Activated CD8-positive, alpha-beta T cell treated with anti-CD3 and anti-CD28 coated beads for 36 hours (primary cell): ENCODE measurements at regions of chr12 and their contacts with region 1.

Region 1: GRCh38 chr12:44774815-44775411 is 101.2 kb downstream of the NELL2 start:
- DNase-seq: peak; percentile 74
- ATAC-seq: peak; percentile 53
- H3K4me3 Mint-ChIP-seq: no peak overlapping the region
- H3K27ac Mint-ChIP-seq: no peak overlapping the region
- H3K4me1 Mint-ChIP-seq: peaks cover 6% of the 10 kb centered on the region
- H3K27me3 Mint-ChIP-seq: no peaks in the 10 kb centered on the region
- CTCF ChIP-seq: peak; percentile 89

Region 2: DNA sequence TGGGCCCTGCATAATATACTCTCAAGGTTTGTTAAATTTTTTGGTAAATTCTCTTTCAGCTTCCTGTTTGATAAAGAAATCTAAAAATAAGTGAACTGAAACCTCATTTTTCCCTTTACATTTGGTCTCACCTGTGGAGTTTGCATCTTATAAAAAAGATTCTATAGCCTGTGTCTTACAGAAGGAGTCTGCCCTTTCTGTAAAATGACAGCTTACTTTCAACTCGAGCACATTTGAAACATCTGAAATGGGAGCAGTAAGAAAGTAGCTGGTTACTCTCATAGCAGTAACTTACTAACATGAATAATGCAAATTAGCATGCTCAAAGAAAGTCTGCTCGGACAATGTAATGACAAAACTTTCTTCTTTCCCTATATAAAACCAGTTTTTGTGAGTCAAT is 54.6 kb before region 1 on chr12:
- CTCF ChIA-PET with region 1: no interaction called
- POLR2A ChIA-PET with region 1: no interaction called
- intact Hi-C with region 1: no loop called
- DNase-seq: no peak
- ATAC-seq: no peak
- H3K4me3 Mint-ChIP-seq: no peak overlapping the region
- H3K27ac Mint-ChIP-seq: no peak overlapping the region
- H3K4me1 Mint-ChIP-seq: peaks cover 58% of the 10 kb centered on the region
- H3K27me3 Mint-ChIP-seq: no peaks in the 10 kb centered on the region
- CTCF ChIP-seq: no peak

Region 3: DNA sequence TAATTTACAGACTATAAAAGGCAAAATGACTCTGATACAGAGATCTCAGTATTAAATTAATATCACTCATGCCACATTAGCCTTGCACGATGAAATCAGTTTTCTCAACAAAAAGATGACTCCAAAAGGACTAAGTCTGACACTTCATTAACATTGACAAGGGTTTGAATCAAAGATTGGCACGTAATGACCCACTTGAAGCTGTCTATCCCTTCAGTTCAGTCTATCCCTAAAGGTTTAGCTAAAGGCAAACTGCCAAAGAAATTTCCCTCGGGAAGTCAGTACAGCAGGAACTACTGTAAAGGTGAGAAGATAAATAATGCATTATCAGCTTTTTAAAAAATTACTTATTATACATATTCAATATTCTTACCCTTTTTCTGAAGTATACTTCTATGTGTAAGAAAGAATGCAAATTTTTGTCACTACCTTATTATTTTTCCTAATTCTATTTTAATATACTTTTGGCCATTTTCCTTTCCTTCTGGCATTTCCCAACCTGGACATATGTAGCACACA is 25.9 kb before region 1 on chr12:
- CTCF ChIA-PET with region 1: interaction called, 10 read pairs
- POLR2A ChIA-PET with region 1: no interaction called
- intact Hi-C with region 1: no loop called
- DNase-seq: no peak
- ATAC-seq: no peak
- H3K4me3 Mint-ChIP-seq: no peak overlapping the region
- H3K27ac Mint-ChIP-seq: no peak overlapping the region
- H3K4me1 Mint-ChIP-seq: peaks cover 30% of the 10 kb centered on the region
- H3K27me3 Mint-ChIP-seq: no peaks in the 10 kb centered on the region
- CTCF ChIP-seq: no peak

Region 4: DNA sequence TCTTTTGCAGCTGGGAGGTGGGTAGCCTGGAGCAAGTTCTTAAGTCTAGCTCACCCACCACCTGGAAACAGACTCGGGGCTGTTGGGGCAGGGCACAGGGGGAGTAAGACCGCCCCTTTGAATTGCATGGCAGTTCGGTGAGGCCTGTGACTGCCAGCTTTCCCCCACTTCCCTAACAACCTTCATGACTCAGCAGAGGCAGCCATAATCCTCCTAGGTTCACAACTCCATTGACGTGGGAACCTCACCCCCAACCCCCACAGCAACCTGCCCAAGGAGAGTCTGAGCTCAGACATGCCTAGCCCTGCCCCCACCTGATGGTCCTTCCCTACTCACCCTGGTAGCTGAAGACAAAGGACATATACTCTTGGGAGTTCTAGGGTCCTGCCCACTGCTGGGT is 13.8 kb after region 1 on chr12:
- CTCF ChIA-PET with region 1: interaction called, 28 read pairs
- POLR2A ChIA-PET with region 1: interaction called, 4 read pairs
- intact Hi-C with region 1: no loop called
- DNase-seq: no peak
- ATAC-seq: no peak
- H3K4me3 Mint-ChIP-seq: no peak overlapping the region
- H3K27ac Mint-ChIP-seq: no peak overlapping the region
- H3K4me1 Mint-ChIP-seq: peaks cover 53% of the 10 kb centered on the region
- H3K27me3 Mint-ChIP-seq: no peaks in the 10 kb centered on the region
- CTCF ChIP-seq: no peak

Region 5: GRCh38 chr12:44812062-44812461 is 37.1 kb after region 1 on chr12:
- CTCF ChIA-PET with region 1: interaction called, 46 read pairs
- POLR2A ChIA-PET with region 1: no interaction called
- intact Hi-C with region 1: no loop called
- DNase-seq: peak; percentile 71
- ATAC-seq: peak; percentile 80
- H3K4me3 Mint-ChIP-seq: no peak overlapping the region
- H3K27ac Mint-ChIP-seq: peak overlapping the region; percentile 62
- H3K4me1 Mint-ChIP-seq: peaks cover 61% of the 10 kb centered on the region
- H3K27me3 Mint-ChIP-seq: no peaks in the 10 kb centered on the region
- CTCF ChIP-seq: peak; percentile 67

Region 6: GRCh38 chr12:44835641-44836379 is 60.9 kb after region 1 on chr12:
- CTCF ChIA-PET with region 1: no interaction called
- POLR2A ChIA-PET with region 1: no interaction called
- intact Hi-C with region 1: no loop called
- DNase-seq: peak; percentile 49
- ATAC-seq: peak; percentile 80
- H3K4me3 Mint-ChIP-seq: peak overlapping the region; percentile 63
- H3K27ac Mint-ChIP-seq: peak overlapping the region; percentile 95
- H3K4me1 Mint-ChIP-seq: peaks cover 96% of the 10 kb centered on the region
- H3K27me3 Mint-ChIP-seq: no peaks in the 10 kb centered on the region
- CTCF ChIP-seq: no peak

Region 7: DNA sequence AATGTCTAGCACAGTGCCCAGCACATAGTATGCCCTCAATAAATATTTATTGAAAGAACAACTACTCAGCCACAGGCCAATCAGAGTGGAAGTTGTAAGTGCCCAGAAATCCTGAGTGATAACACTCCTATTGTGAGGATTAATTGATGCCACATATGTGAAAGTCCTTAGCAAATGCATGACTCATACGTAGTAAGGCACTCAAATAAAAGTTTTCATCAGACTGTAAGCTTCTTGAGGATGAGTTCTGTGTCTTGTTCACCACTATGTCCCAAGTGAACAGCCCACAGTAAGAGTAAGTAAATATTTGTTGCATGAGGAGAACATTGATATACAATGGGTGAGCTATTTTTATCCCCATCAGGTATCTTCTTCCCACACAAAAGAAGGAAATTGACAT is 416.3 kb after region 1 on chr12:
- CTCF ChIA-PET with region 1: no interaction called
- POLR2A ChIA-PET with region 1: no interaction called
- intact Hi-C with region 1: no loop called
- DNase-seq: no peak
- ATAC-seq: peak; percentile 30
- H3K4me3 Mint-ChIP-seq: no peak overlapping the region
- H3K27ac Mint-ChIP-seq: no peak overlapping the region
- H3K4me1 Mint-ChIP-seq: peaks cover 11% of the 10 kb centered on the region
- H3K27me3 Mint-ChIP-seq: no peaks in the 10 kb centered on the region
- CTCF ChIP-seq: no peak

Region 8: GRCh38 chr12:45852508-45852907 is 1077.6 kb after region 1 on chr12:
- CTCF ChIA-PET with region 1: no interaction called
- POLR2A ChIA-PET with region 1: no interaction called
- intact Hi-C with region 1: no loop called
- DNase-seq: no peak
- ATAC-seq: no peak
- H3K4me3 Mint-ChIP-seq: no peak overlapping the region
- H3K27ac Mint-ChIP-seq: no peak overlapping the region
- H3K4me1 Mint-ChIP-seq: peaks cover 4% of the 10 kb centered on the region
- H3K27me3 Mint-ChIP-seq: no peaks in the 10 kb centered on the region
- CTCF ChIP-seq: no peak